ENCODE measurements at regions of chr1 and their contacts with region 1.

Region 1: GRCh38 chr1:53485478-53486394 is 26.5 kb downstream of the DMRTB1 start:
- DNase-seq: peak in 4 of 5 donors; percentile 34 to 39 (median 38)
- H3K4me3 ChIP-seq: no peak overlapping the region
- H3K4me3 Mint-ChIP-seq: peak overlapping the region in 1 of 8 donors; percentile 58
- H3K27ac ChIP-seq: no peak overlapping the region
- H3K27ac Mint-ChIP-seq: no peak overlapping the region
- H3K4me1 ChIP-seq: no peaks in the 10 kb centered on the region
- H3K4me1 Mint-ChIP-seq: peaks cover 0 to 10% (median 5%) of the 10 kb centered on the region in 4 donors
- H3K27me3 ChIP-seq: no peaks in the 10 kb centered on the region
- H3K27me3 Mint-ChIP-seq: peaks cover 17 to 18% of the 10 kb centered on the region in 2 donors

Region 2: DNA sequence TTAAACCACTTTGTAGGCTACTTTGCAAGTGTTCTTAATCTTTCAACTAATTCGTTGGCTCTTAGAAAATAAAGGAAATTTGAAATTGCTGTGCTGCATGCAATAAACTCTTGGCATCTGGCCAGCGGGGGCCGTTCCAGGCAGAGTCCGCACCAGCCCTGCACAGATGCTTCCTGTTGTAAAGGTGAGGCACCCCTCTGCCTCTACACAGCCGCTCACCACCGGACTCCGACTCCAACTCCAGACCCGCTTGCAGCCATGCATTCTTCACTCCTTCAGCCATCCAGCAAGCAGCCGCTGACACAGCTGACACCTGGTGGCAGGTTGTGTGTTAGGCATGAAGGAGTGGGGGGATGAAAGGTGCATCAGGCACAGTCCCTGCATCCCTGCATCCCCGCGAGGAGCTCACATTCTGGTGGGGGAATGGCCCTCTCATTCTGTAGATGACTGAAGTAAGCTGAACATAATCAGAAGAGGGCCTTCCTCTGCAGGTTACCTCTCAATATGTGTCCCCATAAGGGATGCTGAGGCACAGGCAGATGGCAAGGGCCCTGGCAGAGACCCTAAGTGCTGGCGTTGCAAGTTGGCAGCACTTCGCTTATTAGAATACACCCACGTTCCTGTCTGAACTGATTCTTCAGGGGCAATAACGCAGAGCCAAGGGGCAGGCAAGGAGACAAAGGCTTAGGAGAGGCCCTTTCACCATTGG is 196.4 kb after region 1 on chr1:
- CTCF ChIA-PET with region 1: interaction called, 5 read pairs
- POLR2A ChIA-PET with region 1: no interaction called
- intact Hi-C with region 1: loop called (anchors 1 kb)
- DNase-seq: peak in 4 of 5 donors; percentile 19 to 22 (median 20)
- H3K4me3 ChIP-seq: no peak overlapping the region
- H3K4me3 Mint-ChIP-seq: peak overlapping the region in 7 of 8 donors; percentile 27 to 72 (median 45)
- H3K27ac ChIP-seq: no peak overlapping the region
- H3K27ac Mint-ChIP-seq: peak overlapping the region in 1 of 7 donors; percentile 66
- H3K4me1 ChIP-seq: peaks cover 5% of the 10 kb centered on the region
- H3K4me1 Mint-ChIP-seq: peaks cover 5 to 7% (median 6%) of the 10 kb centered on the region in 4 donors
- H3K27me3 ChIP-seq: no peaks in the 10 kb centered on the region
- H3K27me3 Mint-ChIP-seq: peaks cover 16 to 18% of the 10 kb centered on the region in 2 donors

Measured in CD4-positive, alpha-beta memory T cell (primary cell).